ENCODE measurements at regions of chr2 and their contacts with region 1.

Region 1: DNA sequence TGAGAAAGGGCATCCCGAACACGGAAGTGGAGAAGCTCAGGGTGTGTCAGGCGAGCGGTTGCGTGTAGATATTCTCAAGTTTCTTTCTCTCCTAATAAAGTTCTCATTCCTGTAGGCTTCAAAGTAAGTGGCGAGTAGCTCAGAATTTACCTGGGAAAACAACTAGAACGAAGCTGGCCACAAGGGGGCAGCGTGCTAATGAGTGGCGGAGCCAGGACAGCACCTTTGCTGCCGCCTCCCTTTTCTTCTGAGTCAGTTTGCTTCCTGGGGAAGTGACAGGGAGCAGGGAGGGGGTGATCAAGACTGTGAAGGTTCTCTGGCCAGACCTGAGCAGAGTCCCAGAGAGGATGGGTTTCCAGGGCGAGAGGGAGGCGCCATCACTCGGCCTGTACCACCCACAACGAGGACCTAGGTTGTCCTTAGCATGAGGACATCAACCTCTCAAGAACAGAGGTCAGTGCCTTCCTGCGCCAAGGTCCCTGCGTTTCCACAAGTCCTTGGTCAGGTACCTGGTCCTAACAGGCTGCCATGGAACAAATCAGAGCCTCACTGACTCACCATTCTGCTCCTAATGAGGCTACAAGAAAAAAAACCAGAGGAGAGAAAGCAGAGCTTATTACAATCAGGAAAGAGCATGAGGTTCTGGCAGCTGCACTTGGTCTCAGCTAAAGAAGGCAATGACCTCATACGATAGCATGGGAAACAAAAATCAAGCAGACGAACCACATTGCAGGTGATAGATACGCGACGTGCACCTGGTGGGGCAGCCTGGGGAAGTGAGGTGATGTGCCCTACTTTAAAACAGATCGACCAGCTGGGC is 98.6 kb downstream of the PLB1 start:
- DNase-seq: peak; percentile 94 to 95
- H3K4me3 ChIP-seq: no peak overlapping the region; the same call in 1 of the 2 replicates
- H3K27ac ChIP-seq: peak overlapping the region; percentile 69
- H3K4me1 ChIP-seq: peaks cover 40% of the 10 kb centered on the region
- H3K27me3 ChIP-seq: no peaks in the 10 kb centered on the region
- CTCF ChIP-seq: peak; percentile 91

Region 2: GRCh38 chr2:28496781-28497180 is 97.7 kb before region 1 on chr2:
- CTCF ChIA-PET with region 1: no interaction called
- POLR2A ChIA-PET with region 1: no interaction called
- intact Hi-C with region 1: no loop called
- DNase-seq: no peak
- H3K4me3 ChIP-seq: no peak overlapping the region
- H3K27ac ChIP-seq: no peak overlapping the region
- H3K4me1 ChIP-seq: no peaks in the 10 kb centered on the region
- H3K27me3 ChIP-seq: no peaks in the 10 kb centered on the region
- CTCF ChIP-seq: no peak

Region 3: DNA sequence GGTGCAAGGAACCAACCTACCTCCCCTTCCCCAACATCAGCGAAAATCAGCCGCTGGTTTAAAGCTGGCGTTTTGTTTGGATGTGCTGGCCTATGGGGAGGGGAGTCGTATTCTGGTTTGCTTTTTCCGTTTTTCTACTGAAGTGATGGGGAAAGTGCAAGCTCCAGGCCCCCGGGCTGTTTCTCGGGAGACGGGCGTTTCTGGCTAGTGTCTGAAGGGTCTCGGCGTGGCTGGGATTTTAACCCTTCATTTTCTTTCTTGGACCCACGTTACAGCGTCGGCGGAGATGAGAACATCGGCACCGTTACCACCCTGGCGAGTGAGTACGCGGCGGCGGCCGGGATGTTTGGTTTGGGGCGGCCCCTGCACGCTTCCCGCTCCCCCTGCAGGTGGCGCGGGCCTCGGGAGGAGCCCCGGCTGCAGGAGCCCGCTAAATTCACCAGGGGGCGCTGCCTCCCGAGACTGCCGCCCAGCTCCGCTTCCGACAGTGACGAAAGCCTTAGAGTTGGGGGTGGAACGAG is 27.9 kb before region 1 on chr2:
- CTCF ChIA-PET with region 1: interaction called, 10 read pairs
- POLR2A ChIA-PET with region 1: interaction called, 3 read pairs
- intact Hi-C with region 1: loop called (anchors 1 kb)
- DNase-seq: peak; percentile 64 to 89
- H3K4me3 ChIP-seq: peak overlapping the region; percentile 79
- H3K27ac ChIP-seq: no peak overlapping the region
- H3K4me1 ChIP-seq: peaks cover 6% of the 10 kb centered on the region
- H3K27me3 ChIP-seq: no peaks in the 10 kb centered on the region
- CTCF ChIP-seq: peak; percentile 100

Region 4: DNA sequence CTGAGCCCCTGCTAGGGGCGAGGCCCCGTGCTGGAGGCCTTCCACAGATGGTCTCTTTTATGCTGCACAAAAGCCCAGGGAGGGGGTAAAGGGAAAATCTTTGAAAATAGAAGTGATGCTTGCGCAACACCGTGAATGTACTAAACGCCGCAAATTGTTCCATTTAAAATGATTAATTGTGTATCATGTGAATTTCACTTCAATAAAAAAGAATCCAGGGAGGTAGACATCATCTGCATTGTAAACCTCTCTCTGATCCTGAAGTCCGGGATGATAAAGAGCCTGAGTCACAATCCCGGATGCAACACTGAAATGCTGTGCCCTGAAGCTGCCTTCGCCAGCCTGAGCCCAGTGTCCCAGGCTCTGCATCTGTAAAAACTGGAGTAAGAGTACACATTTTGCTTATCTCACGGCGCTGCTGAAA is 49.4 kb after region 1 on chr2:
- CTCF ChIA-PET with region 1: no interaction called
- POLR2A ChIA-PET with region 1: interaction called, 9 read pairs
- intact Hi-C with region 1: loop called (anchors 2 kb)
- DNase-seq: peak; percentile 48 to 92
- H3K4me3 ChIP-seq: peak overlapping the region; percentile 24; the same call in 1 of the 2 replicates
- H3K27ac ChIP-seq: peak overlapping the region; percentile 90
- H3K4me1 ChIP-seq: peaks cover 71% of the 10 kb centered on the region
- H3K27me3 ChIP-seq: no peaks in the 10 kb centered on the region
- CTCF ChIP-seq: no peak

Region 5: GRCh38 chr2:28736034-28736433 is 141.5 kb after region 1 on chr2:
- CTCF ChIA-PET with region 1: no interaction called
- POLR2A ChIA-PET with region 1: interaction called, 11 read pairs
- intact Hi-C with region 1: no loop called
- DNase-seq: peak in 1 of 2 experiments; percentile 34
- H3K4me3 ChIP-seq: no peak overlapping the region
- H3K27ac ChIP-seq: no peak overlapping the region
- H3K4me1 ChIP-seq: peaks cover 8% of the 10 kb centered on the region
- H3K27me3 ChIP-seq: no peaks in the 10 kb centered on the region
- CTCF ChIP-seq: no peak